ENCODE measurements at regions of chr1 and their contacts with region 1.

Region 1: GRCh38 chr1:116724765-116725375 is 29.4 kb upstream of the CD2 start:
- H3K4me3 ChIP-seq: no peak overlapping the region
- H3K27ac ChIP-seq: no peak overlapping the region
- H3K4me1 ChIP-seq: no peaks in the 10 kb centered on the region
- CTCF ChIP-seq: no peak

Region 2: DNA sequence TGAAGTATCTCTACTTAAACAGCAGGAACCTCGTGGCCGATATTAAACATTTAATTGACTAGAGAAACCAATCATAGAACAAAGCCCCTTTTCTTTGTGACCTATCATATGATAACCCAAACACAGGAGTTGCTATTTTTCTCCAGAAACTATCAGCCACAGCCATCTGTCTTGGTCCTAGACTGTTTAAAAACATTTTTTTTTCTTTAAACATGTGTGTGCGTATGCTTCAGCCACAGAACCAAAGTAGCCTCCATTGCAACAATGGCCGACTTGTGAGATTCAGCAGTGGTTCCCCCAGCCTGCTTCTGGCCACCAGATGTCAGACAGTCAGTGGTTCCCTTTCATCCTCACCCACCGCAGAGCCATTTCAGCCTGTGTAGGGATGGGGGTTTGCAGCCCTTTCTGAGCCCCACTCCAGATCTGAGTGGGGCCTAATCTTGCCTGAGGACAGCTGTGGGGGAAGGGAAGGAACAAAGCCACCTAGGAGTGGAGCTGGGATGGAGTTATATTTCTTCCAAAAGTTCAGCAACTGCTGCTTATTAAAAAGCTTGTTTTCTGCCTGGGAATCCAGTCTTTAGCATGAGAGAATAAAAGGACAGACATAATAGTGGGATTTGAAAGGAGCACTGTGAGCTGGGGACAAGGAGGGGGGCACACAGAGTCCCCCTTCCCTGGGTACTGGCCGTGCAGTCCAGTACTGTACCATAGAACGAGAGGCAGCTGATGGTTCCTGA is 45.6 kb before region 1 on chr1:
- CTCF ChIA-PET with region 1: no interaction called
- POLR2A ChIA-PET with region 1: no interaction called
- H3K4me3 ChIP-seq: no peak overlapping the region
- H3K27ac ChIP-seq: no peak overlapping the region
- H3K4me1 ChIP-seq: no peaks in the 10 kb centered on the region
- CTCF ChIP-seq: 0 out of 2 replicates have a peak, but pooled peaks have one; percentile 26

Region 3: GRCh38 chr1:116693759-116694482 is 30.9 kb before region 1 on chr1:
- CTCF ChIA-PET with region 1: interaction called, 13 read pairs
- POLR2A ChIA-PET with region 1: no interaction called
- H3K4me3 ChIP-seq: no peak overlapping the region
- H3K27ac ChIP-seq: no peak overlapping the region
- H3K4me1 ChIP-seq: no peaks in the 10 kb centered on the region
- CTCF ChIP-seq: no peak

Region 4: GRCh38 chr1:116708255-116708865 is 16.5 kb before region 1 on chr1:
- CTCF ChIA-PET with region 1: interaction called, 10 read pairs
- POLR2A ChIA-PET with region 1: no interaction called
- H3K4me3 ChIP-seq: no peak overlapping the region
- H3K27ac ChIP-seq: no peak overlapping the region
- H3K4me1 ChIP-seq: no peaks in the 10 kb centered on the region
- CTCF ChIP-seq: no peak

Region 5: DNA sequence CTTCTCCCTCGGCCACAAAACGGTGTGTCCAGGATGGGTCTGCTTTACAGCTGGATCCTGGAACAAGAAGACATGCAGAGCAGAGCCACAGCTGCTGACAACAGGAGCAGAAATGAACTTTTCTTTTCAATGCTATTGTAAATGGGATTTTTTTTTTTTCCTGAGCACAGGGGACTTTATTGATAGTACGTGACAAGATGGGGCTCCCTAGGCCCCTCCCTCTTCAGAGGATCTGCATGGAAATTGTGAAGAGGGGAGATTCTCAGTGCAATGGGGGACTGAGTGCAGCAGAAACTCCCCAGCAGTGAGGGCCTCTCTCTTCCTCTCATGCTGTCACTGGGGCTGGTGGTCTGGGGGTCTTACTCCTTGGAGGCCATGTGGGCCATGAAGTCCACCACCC is 11.4 kb before region 1 on chr1:
- CTCF ChIA-PET with region 1: interaction called, 11 read pairs
- POLR2A ChIA-PET with region 1: no interaction called
- H3K4me3 ChIP-seq: no peak overlapping the region
- H3K27ac ChIP-seq: no peak overlapping the region
- H3K4me1 ChIP-seq: no peaks in the 10 kb centered on the region
- CTCF ChIP-seq: no peak

Region 6: GRCh38 chr1:116737020-116737854 is 12.4 kb after region 1 on chr1:
- CTCF ChIA-PET with region 1: interaction called, 20 read pairs
- POLR2A ChIA-PET with region 1: no interaction called
- H3K4me3 ChIP-seq: no peak overlapping the region
- H3K27ac ChIP-seq: no peak overlapping the region
- H3K4me1 ChIP-seq: no peaks in the 10 kb centered on the region
- CTCF ChIP-seq: peak; percentile 52; the same call in 1 of the 2 replicates

Region 7: GRCh38 chr1:117059678-117060440 is 335.0 kb after region 1 on chr1 and contains the start of gene TTF2:
- CTCF ChIA-PET with region 1: interaction called, 10 read pairs
- POLR2A ChIA-PET with region 1: no interaction called
- H3K4me3 ChIP-seq: peak within 1 kb of the TSS; percentile 90
- H3K27ac ChIP-seq: peak within 1 kb of the TSS; percentile 86
- H3K4me1 ChIP-seq: no peaks in the 10 kb centered on the region
- CTCF ChIP-seq: peak; percentile 71